Left lung (tissue), 14 donors: ENCODE measurements at regions of chr6 and their contacts with region 1.

Region 1: GRCh38 chr6:107847844-107848802 is 24.0 kb upstream of the SCML4 start:
- DNase-seq: peak; percentile 79 to 98 (median 88)
- ATAC-seq: peak; percentile 100
- H3K4me3 ChIP-seq: peak overlapping the region; percentile 17 to 30
- H3K27ac ChIP-seq: no peak overlapping the region
- H3K4me1 ChIP-seq: peaks cover 0 to 9% of the 10 kb centered on the region in 2 donors
- H3K27me3 ChIP-seq: peaks cover 0 to 15% of the 10 kb centered on the region in 2 donors
- CTCF ChIP-seq: peak; percentile 96 to 97

Region 2: DNA sequence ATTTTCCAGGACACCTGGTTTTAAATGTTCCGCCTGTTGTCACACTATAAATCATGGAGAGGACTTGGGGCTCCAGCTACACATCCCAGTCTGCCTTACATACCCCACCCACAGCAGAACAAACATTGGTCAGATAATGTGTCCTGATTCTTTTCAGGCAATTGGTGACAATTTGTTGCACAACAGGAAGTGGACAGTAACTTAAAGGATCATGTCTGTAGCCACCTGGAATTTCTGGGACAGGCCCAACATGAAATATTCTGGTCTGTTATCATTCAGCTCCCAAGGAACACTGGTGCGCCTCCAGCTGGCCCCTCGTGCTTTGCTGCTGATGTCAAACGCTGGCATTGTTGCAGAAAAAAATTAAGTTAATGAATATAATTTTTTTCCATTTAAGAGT is 241.0 kb before region 1 on chr6:
- intact Hi-C with region 1: no loop called
- DNase-seq: peak in 2 of 4 donors; percentile 27 to 72
- ATAC-seq: no peak
- H3K4me3 ChIP-seq: no peak overlapping the region
- H3K27ac ChIP-seq: no peak overlapping the region
- H3K4me1 ChIP-seq: no peaks in the 10 kb centered on the region
- H3K27me3 ChIP-seq: no peaks in the 10 kb centered on the region
- CTCF ChIP-seq: no peak

Region 3: DNA sequence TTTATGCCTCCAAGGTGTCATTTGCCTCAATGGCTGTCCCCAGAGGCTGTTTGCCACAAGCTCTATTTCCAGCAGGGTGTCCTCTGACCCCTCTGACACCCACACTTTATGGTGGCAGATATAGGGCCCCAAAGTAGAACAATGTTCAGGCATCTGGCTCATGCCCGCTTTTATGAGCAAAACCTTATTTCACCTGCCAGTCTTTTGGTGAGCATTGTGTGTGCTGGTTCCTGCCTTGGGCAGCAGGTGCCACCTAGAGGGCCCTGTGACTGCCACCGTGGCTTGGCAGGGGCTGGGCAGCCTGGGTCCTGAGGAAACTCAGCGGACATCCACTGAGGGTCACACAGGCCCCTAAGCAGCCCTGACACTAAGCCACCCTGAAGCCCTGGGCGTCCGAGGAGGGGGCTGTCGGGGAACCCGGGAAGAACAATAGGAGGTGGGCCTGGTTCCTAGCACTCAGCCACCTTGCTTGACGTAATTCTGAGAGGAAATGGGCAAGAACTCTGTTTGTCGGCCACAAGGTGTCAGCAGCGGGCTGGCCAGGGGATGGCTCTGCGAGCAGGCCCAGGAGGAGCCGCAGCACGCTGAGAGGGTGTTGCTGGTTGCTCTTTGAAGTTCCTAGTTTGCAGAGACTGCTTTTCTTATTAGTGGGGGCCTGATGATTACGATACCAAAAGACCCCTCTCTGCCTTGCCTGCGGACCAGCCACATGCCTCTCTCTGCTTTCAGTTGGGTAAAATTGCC is 173.0 kb before region 1 on chr6:
- intact Hi-C with region 1: loop called in 1 of 2 experiments (anchors 10 kb)
- DNase-seq: peak; percentile 76 to 94 (median 90)
- ATAC-seq: peak; percentile 99
- H3K4me3 ChIP-seq: no peak overlapping the region
- H3K27ac ChIP-seq: no peak overlapping the region
- H3K4me1 ChIP-seq: peaks cover 5 to 25% of the 10 kb centered on the region in 2 donors
- H3K27me3 ChIP-seq: no peaks in the 10 kb centered on the region
- CTCF ChIP-seq: peak; percentile 71 to 81